Mammary epithelial cell (primary cell): ENCODE measurements at regions of chr14 and their contacts with region 1.

Region 1: GRCh38 chr14:68729556-68729955 is 63.3 kb downstream of the ZFP36L1 start:
- DNase-seq: no peak
- H3K4me3 ChIP-seq: no peak overlapping the region
- H3K27ac ChIP-seq: no peak overlapping the region
- H3K4me1 ChIP-seq: peaks cover 6% of the 10 kb centered on the region
- H3K27me3 ChIP-seq: no peaks in the 10 kb centered on the region
- CTCF ChIP-seq: no peak

Region 2: DNA sequence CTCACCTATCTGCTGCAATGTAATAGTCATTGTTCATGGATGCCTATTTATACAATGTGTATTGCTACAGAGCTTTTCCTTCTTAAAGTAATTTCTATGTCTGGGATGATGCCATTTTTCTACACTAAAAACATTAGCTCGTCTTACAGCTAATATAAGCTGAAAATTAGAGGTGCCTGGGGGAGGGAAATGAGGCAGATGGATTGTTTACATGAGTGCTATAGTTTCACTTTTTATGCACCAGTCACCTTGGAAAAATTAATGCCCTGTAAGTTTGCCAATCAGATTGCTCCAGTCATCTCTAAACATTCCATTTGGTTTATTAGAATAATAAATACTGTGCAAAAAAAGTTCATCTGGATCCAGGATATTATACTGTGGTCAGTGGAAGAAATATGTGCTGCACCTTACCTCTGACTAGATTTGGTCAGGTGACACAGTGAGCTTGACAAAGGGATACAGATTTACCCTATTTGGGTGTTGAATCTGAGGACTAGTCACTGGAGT is 473.8 kb before region 1 on chr14:
- CTCF ChIA-PET with region 1: interaction called, 11 read pairs
- dilution Hi-C with region 1: no loop called
- in situ Hi-C with region 1: no loop called
- intact Hi-C with region 1: no loop called
- DNase-seq: peak; percentile 77
- H3K4me3 ChIP-seq: no peak overlapping the region
- H3K27ac ChIP-seq: peak overlapping the region; percentile 38
- H3K4me1 ChIP-seq: peaks cover 29% of the 10 kb centered on the region
- H3K27me3 ChIP-seq: no peaks in the 10 kb centered on the region
- CTCF ChIP-seq: no peak